MCF 10A (cell line): ENCODE measurements at regions of chr5 and their contacts with region 1.

Region 1: GRCh38 chr5:132386644-132387286 is 17.3 kb downstream of the SLC22A5 start:
- DNase-seq: peak; percentile 87
- H3K4me3 Mint-ChIP-seq: no peak overlapping the region
- H3K27ac Mint-ChIP-seq: peak overlapping the region; percentile 13
- H3K4me1 Mint-ChIP-seq: peaks cover 53% of the 10 kb centered on the region
- H3K27me3 Mint-ChIP-seq: no peaks in the 10 kb centered on the region
- CTCF ChIP-seq: peak; percentile 89

Region 2: DNA sequence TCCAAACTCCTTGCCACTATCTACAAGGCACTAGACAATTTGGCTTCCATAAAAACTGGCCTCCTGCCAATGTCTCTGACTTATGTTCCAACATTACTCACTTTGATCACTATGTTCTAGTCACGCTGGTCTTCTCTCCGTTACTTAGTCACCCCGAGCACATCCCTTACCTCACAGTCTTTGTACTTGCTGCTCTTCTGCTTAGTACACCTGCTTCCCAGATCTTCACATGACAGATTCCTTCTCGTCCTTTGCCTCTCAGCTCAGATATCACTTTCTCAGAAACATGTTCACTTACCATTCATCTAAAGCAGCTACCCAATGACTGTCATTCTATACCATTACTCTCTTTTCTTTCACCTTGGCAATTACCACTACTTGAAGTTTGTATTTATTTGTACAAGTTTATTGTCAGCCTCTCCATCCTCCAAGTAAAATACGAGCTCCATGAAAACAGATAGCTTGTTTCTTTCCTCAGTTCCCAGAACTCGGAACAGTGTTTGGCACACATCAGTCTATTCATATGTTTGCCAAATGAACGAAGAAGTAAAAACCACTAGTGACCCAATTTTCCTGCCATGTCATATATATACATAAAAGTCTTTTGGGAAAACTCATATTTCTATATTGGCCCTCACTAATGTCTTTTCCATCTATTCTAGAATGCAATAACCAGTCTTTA is 23.2 kb before region 1 on chr5:
- CTCF ChIA-PET with region 1: interaction called, 14 read pairs
- POLR2A ChIA-PET with region 1: interaction called, 124 read pairs
- intact Hi-C with region 1: loop called (anchors 2 kb)
- DNase-seq: peak; percentile 99
- H3K4me3 Mint-ChIP-seq: peak overlapping the region; percentile 45
- H3K27ac Mint-ChIP-seq: peak overlapping the region; percentile 99
- H3K4me1 Mint-ChIP-seq: peaks cover 52% of the 10 kb centered on the region
- H3K27me3 Mint-ChIP-seq: no peaks in the 10 kb centered on the region
- CTCF ChIP-seq: no peak

Region 3: DNA sequence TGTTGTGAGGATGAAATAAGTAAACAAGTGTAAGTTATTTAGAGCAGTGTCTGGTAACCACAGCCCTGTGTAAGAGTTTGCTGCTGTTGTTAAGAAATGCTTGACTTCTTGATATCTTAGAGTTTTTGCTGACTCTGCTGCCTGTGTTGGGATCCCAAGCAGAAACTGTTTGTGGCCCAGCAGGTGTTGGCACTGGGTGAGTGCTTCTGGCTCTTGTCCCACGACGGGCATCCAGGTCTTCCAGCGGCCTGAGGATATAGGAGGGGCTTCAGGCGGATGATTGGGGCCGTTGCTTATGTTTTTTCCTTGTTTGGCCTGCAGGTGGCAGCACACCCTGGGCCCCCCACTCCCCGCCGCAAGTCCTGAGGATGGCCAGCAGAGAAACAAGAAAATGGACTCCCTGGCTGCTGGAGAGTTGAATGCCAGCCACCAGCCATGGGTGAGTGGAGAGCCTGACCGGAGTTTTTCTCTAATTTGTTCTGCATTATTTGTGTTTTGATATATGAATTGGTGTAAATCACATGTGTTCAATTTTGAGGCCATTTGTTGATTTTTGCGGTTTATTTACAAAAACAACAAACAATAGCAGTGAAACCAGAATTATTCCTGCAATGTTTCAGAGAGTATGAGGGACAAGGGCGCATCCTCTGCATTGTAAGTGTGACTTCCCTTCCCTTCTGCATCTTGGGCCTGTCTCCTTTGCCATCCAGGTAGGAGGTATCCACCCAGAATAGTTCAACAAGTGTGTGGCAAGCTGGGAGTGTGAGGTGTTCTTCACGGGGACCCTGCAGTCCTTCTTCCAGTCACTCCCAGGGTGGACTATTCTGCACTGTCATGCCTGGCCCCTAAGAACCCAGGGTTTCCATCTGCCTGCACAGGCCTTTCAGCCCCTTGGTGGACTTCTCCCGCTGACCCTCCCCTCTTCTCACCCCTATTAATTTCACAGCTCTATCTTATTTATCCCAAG is 33.0 kb after region 1 on chr5:
- CTCF ChIA-PET with region 1: interaction called, 18 read pairs
- POLR2A ChIA-PET with region 1: interaction called, 70 read pairs
- intact Hi-C with region 1: loop called (anchors 2 kb)
- DNase-seq: peak; percentile 87
- H3K4me3 Mint-ChIP-seq: no peak overlapping the region
- H3K27ac Mint-ChIP-seq: peak overlapping the region; percentile 17
- H3K4me1 Mint-ChIP-seq: peaks cover 35% of the 10 kb centered on the region
- H3K27me3 Mint-ChIP-seq: no peaks in the 10 kb centered on the region
- CTCF ChIP-seq: peak; percentile 97

Region 4: DNA sequence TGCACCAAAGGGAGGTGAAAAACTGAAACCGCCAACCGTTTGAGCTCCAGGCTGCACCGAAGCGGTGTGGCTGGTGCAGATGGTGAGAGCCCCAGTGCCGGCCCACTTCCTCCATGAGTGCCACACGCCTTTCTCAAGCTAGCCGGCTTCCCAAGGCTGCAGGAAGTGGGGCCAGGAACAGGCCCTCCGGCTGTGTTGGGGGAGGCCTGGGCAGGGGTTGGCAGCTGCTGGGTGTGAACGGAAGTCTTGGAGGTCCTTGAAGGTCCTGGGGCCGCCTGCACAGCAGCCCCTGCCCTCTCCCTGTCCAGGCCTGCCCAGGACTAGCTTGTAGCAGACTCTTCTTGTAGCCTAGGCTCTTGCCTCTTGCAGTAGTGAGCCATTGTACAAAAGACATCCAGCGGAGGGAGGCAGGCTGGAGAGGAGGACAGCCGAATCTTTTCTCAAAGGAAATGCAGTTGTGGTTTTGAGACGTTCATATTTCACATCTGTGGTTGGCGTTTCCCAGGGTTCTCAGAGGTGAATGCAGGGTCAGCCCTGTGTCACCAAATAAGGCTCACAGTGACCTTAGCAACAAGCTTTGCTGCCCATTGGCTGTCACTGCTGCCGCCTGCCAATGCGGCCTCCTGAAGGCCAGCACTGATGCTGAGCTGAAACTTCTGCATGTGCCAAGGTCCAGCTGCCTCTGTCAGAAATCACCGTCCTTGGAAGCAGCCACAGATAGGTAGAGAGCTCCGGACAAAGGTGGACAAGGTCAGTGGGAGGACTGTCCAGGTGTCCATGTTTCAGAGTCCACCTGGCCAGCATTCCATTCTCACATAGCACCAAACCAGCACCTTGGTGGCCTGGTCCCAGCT is 79.9 kb after region 1 on chr5:
- CTCF ChIA-PET with region 1: interaction called, 12 read pairs
- POLR2A ChIA-PET with region 1: interaction called, 3 read pairs
- intact Hi-C with region 1: no loop called
- DNase-seq: no peak
- H3K4me3 Mint-ChIP-seq: no peak overlapping the region
- H3K27ac Mint-ChIP-seq: no peak overlapping the region
- H3K4me1 Mint-ChIP-seq: peaks cover 18% of the 10 kb centered on the region
- H3K27me3 Mint-ChIP-seq: no peaks in the 10 kb centered on the region
- CTCF ChIP-seq: no peak

Region 5: GRCh38 chr5:132500931-132501630 is 114.3 kb after region 1 on chr5:
- CTCF ChIA-PET with region 1: interaction called, 359 read pairs
- POLR2A ChIA-PET with region 1: interaction called, 84 read pairs
- intact Hi-C with region 1: loop called (anchors 1 kb)
- DNase-seq: peak; percentile 91
- H3K4me3 Mint-ChIP-seq: no peak overlapping the region
- H3K27ac Mint-ChIP-seq: peak overlapping the region; percentile 83
- H3K4me1 Mint-ChIP-seq: peaks cover 35% of the 10 kb centered on the region
- H3K27me3 Mint-ChIP-seq: no peaks in the 10 kb centered on the region
- CTCF ChIP-seq: peak; percentile 99

Region 6: GRCh38 chr5:132820162-132820754 is 433.5 kb after region 1 on chr5:
- CTCF ChIA-PET with region 1: interaction called, 3 read pairs
- POLR2A ChIA-PET with region 1: no interaction called
- intact Hi-C with region 1: loop called (anchors 5 kb)
- DNase-seq: peak; percentile 96
- H3K4me3 Mint-ChIP-seq: no peak overlapping the region
- H3K27ac Mint-ChIP-seq: no peak overlapping the region
- H3K4me1 Mint-ChIP-seq: peaks cover 8% of the 10 kb centered on the region
- H3K27me3 Mint-ChIP-seq: no peaks in the 10 kb centered on the region
- CTCF ChIP-seq: peak; percentile 97